Left cardiac atrium (tissue), 4 donors: ENCODE measurements at regions of chr1 and their contacts with region 1.

Region 1: GRCh38 chr1:154961497-154962262 is at the start of gene PYGO2:
- DNase-seq: peak; percentile 87
- ATAC-seq: peak; percentile 89 to 90
- total RNA-seq, gene PYGO2: 15.3 to 15.8 TPM

Region 2: GRCh38 chr1:154695985-154696384 is 265.7 kb before region 1 on chr1:
- intact Hi-C with region 1: no loop called
- DNase-seq: no peak
- ATAC-seq: no peak

Region 3: DNA sequence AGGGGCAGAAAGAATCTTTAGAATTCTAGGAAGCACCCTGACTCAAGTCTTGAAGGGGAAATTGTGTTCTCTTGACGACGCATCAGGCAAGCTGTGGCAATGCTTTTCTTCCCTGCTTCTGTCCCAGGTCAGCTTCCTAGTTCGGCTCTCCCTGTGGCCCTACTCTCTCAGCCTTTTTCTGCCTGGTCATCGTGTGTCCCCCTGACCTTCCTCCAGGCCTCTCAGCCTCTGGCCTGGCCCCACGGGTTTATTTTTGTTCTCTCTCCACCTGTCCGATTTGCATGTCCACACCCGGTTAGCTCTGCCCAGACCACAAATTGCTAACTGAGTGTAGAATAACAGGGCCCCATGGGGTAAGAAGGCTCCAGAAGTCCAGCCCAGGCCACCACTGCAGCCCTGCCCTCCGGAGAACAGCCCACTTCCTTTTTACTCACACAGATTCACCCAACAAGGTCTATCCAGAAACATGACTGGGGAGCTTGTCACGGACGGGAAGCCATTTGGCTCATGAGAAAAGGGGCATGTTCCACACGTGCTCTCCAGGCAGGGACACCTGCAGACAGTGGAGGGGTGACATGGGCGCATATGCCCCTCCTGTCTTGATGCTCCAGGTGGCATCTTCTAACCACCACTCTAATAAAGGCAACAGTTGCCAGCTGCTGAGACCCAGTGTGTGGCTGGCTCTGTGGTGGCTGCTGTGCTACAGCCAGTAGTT is 101.4 kb before region 1 on chr1:
- intact Hi-C with region 1: no loop called
- DNase-seq: no peak
- ATAC-seq: no peak

Region 4: GRCh38 chr1:155012026-155012546 is 50.4 kb after region 1 on chr1:
- intact Hi-C with region 1: loop called in 1 of 2 experiments (anchors 5 kb)
- DNase-seq: peak; percentile 80
- ATAC-seq: peak; percentile 42 to 57

Region 5: GRCh38 chr1:155063550-155064110 is 102.0 kb after region 1 on chr1 and contains the start of gene EFNA4:
- intact Hi-C with region 1: loop called in 1 of 2 experiments (anchors 5 kb)
- DNase-seq: peak; percentile 85
- ATAC-seq: peak; percentile 92
- total RNA-seq, gene EFNA4: 2.5 to 2.7 TPM